Common myeloid progenitor, CD34-positive (primary cell): ENCODE measurements at regions of chr7 and their contacts with region 1.

Region 1: DNA sequence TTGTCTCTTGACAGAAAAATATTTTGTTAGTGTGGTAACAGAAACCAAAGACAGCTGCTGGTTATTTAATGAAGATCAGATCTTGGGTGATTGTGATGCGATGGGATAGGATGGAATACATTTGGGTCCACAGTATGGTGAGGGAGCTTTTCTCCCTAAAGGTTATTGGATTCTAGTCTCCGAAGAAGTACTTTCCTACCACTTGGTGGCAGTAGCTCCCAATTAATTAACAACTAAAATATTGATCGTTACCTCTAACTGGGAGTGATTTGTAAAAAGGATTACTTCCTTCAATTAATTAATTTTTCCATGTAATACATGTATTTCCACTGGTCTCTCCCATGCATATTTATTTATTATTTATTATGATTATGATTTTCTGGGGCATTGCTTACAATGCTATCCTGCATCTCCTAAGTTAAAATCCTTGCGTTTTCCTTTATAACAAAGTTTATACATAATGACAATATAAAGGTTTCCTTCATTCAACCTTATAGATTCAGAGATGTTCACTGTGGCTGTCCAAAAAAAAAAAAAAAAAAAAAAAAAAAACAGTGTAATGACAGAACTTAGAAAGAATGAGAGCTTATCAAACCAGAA is 25.6 kb downstream of the TMEM196 start:
- DNase-seq: peak; percentile 36 to 49 (median 38)
- H3K4me3 ChIP-seq: no peak overlapping the region
- H3K27ac ChIP-seq: no peak overlapping the region
- H3K4me1 ChIP-seq: no peaks in the 10 kb centered on the region
- H3K27me3 ChIP-seq: no peaks in the 10 kb centered on the region

Region 2: DNA sequence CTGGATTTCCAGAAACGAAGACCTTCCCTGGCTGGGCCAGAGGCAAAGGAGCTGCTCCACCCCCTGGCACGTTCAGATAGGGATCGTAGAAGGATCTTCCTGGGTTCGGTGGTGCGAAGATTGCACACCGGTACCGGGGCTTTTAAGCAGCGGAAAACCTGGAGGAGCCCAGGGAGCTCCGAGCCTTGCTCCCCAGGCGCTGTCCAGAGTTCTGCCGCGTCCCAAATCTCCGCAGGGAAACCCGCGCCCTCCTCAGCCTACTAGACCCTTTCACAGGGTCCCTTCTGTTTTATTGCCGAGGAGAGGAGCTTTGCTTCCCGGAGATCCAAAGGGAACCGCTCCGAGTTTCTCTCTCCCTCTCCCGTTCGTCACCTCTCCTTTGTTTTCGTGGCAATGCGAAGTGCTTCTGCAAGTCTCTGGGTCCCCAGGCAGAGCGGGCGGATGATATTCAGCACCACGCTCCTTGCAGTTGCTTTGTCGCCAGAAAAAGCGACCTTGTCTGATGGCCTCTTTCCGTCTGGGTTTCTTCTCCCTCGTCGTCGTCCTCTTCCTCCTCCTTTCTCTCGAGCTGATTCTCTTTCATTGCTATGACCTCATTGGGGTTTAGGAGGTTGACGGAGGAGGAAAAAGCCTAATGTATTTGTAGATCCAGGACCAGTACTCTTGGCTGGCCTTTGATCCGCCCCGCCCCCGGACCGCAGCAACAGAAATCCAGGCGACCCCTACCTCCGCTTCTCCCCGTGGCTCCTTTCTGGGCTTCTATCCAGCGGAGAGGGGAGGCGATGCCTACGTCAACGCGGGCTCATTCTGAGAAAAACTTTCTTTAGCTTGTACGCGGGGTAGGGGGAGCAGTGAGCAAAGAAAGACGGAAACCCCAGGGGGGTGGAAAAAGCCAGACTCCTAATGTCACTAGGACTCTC is 25.3 kb after region 1 on chr7 and contains the start of gene TMEM196:
- CTCF ChIA-PET with region 1: no interaction called
- POLR2A ChIA-PET with region 1: no interaction called
- DNase-seq: peak; percentile 29 to 78 (median 68)
- H3K4me3 ChIP-seq: peak within 1 kb of the TSS; percentile 33 to 68 (median 44)
- H3K27ac ChIP-seq: no peak within 1 kb of the TSS
- H3K4me1 ChIP-seq: peaks cover 0 to 17% (median 14%) of the 10 kb centered on the region in 4 experiments
- H3K27me3 ChIP-seq: peaks cover 6 to 36% (median 22%) of the 10 kb centered on the region in 5 experiments

Region 3: DNA sequence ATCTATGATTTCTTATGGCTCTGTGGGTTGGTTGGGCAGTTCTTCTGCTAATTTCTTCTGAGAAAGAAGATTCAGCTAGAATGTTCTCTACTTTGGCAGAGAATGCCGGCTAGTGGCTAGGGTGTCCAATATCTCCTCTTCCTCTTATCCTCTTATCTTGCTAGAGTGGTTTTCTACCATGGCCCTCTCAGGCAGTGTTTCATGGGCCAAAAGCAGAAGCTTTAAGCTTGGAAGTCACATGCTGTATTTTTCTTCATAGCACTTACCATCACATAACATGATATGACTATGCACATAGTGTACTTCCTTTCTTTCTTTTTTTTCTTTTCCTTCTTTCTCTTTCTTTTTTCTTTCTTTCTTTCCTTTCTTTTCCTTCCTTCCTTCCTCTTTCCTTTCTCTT is 722.9 kb after region 1 on chr7:
- CTCF ChIA-PET with region 1: no interaction called
- POLR2A ChIA-PET with region 1: no interaction called
- DNase-seq: peak; percentile 60 to 94 (median 89)
- H3K4me3 ChIP-seq: no peak overlapping the region
- H3K27ac ChIP-seq: peak overlapping the region in 1 of 2 experiments; percentile 55
- H3K4me1 ChIP-seq: peaks cover 0 to 32% (median 18%) of the 10 kb centered on the region in 4 experiments
- H3K27me3 ChIP-seq: no peaks in the 10 kb centered on the region

Region 4: DNA sequence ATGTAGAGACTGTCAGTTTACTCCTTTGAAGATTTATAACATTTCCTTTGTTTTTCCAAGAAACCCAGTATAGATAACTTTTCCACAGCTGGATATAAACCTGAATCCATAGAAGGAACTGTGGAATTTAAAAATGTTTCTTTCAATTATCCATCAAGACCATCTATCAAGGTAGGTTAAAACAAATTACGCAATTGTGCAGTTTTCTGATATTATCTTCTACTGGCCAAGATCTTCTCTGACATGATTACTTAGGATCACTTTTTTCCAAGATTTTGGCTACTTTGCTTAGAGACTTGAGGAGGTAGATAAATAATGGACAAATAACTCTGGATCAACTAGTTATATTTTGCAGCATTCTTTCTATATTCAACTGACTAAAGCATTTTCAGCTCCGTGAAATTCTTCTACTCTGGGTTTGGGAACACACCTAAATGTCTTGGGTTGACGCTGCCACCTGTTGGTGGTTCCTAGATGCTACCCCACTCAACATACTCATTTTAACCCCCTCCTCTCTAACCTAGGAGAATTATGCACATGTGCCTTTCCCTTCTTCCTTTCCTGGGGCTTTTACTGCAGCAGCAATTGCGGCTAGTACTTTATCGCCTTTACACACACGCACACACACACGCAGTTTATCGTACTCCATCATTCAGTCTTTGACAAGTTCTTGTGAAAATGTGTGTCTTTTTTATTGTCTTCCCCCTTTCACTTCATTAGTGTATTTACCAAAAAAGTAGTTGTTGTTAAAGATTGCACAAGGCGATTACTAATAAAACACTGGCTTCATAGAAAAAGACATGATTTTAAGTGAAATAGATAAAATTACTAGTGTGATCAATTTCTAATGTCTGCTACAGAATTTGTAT is 900.3 kb after region 1 on chr7:
- CTCF ChIA-PET with region 1: interaction called, 11 read pairs
- POLR2A ChIA-PET with region 1: no interaction called
- DNase-seq: peak; percentile 63 to 83 (median 80)
- H3K4me3 ChIP-seq: peak overlapping the region in 1 of 7 experiments; percentile 29
- H3K27ac ChIP-seq: no peak overlapping the region
- H3K4me1 ChIP-seq: peaks cover 0 to 10% (median 3%) of the 10 kb centered on the region in 4 experiments
- H3K27me3 ChIP-seq: no peaks in the 10 kb centered on the region